T-cell (primary cell): ENCODE measurements at regions of chr2 and their contacts with region 1.

Region 1: DNA sequence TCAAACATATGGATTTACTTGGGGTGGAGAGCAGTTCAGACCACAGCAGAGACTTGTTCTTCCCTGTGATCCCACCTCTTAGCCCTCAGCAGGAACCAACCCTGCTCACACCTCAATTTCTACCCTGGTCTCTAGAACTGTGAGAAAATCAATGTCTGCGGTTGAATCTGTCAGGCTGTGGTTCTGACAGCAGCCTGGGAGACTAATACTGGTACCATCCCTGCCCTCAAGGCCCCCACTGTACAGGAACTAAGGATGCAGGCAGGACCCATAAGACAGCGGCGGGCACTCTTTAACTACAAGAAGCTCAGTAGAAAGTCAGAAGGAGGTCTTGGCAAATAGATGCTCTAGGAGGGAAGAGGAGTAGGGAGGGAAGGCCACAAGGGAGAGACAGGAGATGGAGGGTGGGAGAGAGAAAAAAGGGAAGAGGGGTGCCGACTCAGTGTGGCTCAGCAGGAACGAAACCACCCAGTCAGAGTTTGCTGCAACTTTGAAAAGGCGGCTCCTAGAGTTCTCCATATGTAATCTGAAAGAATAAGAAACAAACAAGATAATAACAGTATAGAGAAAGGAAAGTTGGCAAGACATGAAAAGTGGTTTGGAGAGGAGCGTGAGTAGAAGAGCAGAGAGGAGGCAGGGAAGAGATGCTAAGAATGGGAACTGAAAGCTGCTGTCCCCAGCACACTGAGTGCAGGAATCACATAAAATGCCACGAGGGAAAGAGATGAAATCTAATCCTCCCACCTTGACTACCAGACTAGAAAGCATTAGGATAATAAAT is 323.9 kb upstream of the ID2 start:
- DNase-seq: no peak
- ATAC-seq: no peak
- H3K4me3 ChIP-seq: no peak overlapping the region
- H3K4me3 Mint-ChIP-seq: no peak overlapping the region
- H3K27ac ChIP-seq: no peak overlapping the region
- H3K27ac Mint-ChIP-seq: no peak overlapping the region
- H3K4me1 ChIP-seq: peaks cover 0 to 8% of the 10 kb centered on the region in 2 experiments
- H3K4me1 Mint-ChIP-seq: peaks cover 0 to 2% (median 0%) of the 10 kb centered on the region in 3 donors
- H3K27me3 ChIP-seq: no peaks in the 10 kb centered on the region
- H3K27me3 Mint-ChIP-seq: no peaks in the 10 kb centered on the region

Region 2: GRCh38 chr2:7878786-7879482 is 479.0 kb before region 1 on chr2:
- CTCF ChIA-PET with region 1: no interaction called
- POLR2A ChIA-PET with region 1: no interaction called
- DNase-seq: no peak
- ATAC-seq: no peak
- H3K4me3 ChIP-seq: no peak overlapping the region
- H3K4me3 Mint-ChIP-seq: no peak overlapping the region
- H3K27ac ChIP-seq: no peak overlapping the region
- H3K27ac Mint-ChIP-seq: no peak overlapping the region
- H3K4me1 ChIP-seq: no peaks in the 10 kb centered on the region
- H3K4me1 Mint-ChIP-seq: no peaks in the 10 kb centered on the region
- H3K27me3 ChIP-seq: no peaks in the 10 kb centered on the region
- H3K27me3 Mint-ChIP-seq: no peaks in the 10 kb centered on the region

Region 3: GRCh38 chr2:8036366-8036765 is 321.6 kb before region 1 on chr2:
- CTCF ChIA-PET with region 1: interaction called in 1 of 2 experiments, 12 read pairs
- POLR2A ChIA-PET with region 1: no interaction called
- DNase-seq: no peak
- ATAC-seq: no peak
- H3K4me3 ChIP-seq: no peak overlapping the region
- H3K4me3 Mint-ChIP-seq: no peak overlapping the region
- H3K27ac ChIP-seq: no peak overlapping the region
- H3K27ac Mint-ChIP-seq: no peak overlapping the region
- H3K4me1 ChIP-seq: peaks cover 0 to 4% of the 10 kb centered on the region in 2 experiments
- H3K4me1 Mint-ChIP-seq: no peaks in the 10 kb centered on the region
- H3K27me3 ChIP-seq: peaks cover 0 to 4% of the 10 kb centered on the region in 2 experiments
- H3K27me3 Mint-ChIP-seq: no peaks in the 10 kb centered on the region

Region 4: GRCh38 chr2:8893978-8894820 is 536.3 kb after region 1 on chr2:
- CTCF ChIA-PET with region 1: no interaction called
- POLR2A ChIA-PET with region 1: no interaction called
- DNase-seq: no peak
- ATAC-seq: no peak
- H3K4me3 ChIP-seq: no peak overlapping the region
- H3K4me3 Mint-ChIP-seq: no peak overlapping the region
- H3K27ac ChIP-seq: no peak overlapping the region
- H3K27ac Mint-ChIP-seq: no peak overlapping the region
- H3K4me1 ChIP-seq: no peaks in the 10 kb centered on the region
- H3K4me1 Mint-ChIP-seq: no peaks in the 10 kb centered on the region
- H3K27me3 ChIP-seq: no peaks in the 10 kb centered on the region
- H3K27me3 Mint-ChIP-seq: no peaks in the 10 kb centered on the region